ENCODE measurements at regions of chr9 and their contacts with region 1.

Region 1: GRCh38 chr9:68872026-68872501 is 141.8 kb downstream of the PRKACG start:
- DNase-seq: peak; percentile 75 to 93
- H3K4me3 ChIP-seq: peak overlapping the region in 1 of 4 experiments; percentile 33; a peak in 1 of 8 replicates
- H3K27ac ChIP-seq: peak overlapping the region; percentile 93
- H3K4me1 ChIP-seq: peaks cover 2 to 38% (median 26%) of the 10 kb centered on the region in 4 experiments; a peak in 6 of 7 replicates
- H3K27me3 ChIP-seq: no peaks in the 10 kb centered on the region
- CTCF ChIP-seq: no peak
- EP300 ChIP-seq: peak in 1 of 2 experiments; percentile 96; a peak in 2 of 3 replicates
- POLR2A ChIP-seq: peak in 1 of 2 experiments; percentile 75; a peak in 2 of 3 replicates
- RAD21 ChIP-seq: peak in 1 of 2 experiments; percentile 13; a peak in 2 of 4 replicates

Region 2: DNA sequence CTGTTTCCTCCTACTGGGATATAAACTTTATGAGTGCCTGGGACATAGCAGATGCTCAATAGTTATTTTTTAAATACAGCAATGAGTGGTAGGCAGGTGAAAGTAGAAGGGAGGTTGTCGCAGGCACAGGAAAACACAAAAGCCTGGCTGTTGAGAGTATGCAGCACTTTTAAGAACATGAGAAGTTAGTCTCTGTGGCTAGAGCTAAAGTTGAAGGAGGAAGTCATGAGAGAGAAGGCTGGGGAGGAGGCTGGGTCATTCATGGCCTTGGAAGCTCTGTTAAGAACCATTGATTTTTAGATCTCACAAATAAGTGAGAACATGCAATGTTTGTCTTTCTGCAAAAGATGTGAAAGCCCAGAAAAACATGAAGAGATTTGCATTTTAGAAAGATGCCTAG is 15.2 kb after region 1 on chr9:
- CTCF ChIA-PET with region 1: interaction called, 3 read pairs
- POLR2A ChIA-PET with region 1: interaction called, 11 read pairs
- DNase-seq: no peak
- H3K4me3 ChIP-seq: no peak overlapping the region
- H3K27ac ChIP-seq: no peak overlapping the region
- H3K4me1 ChIP-seq: no peaks in the 10 kb centered on the region
- H3K27me3 ChIP-seq: no peaks in the 10 kb centered on the region
- CTCF ChIP-seq: no peak
- EP300 ChIP-seq: no peak
- POLR2A ChIP-seq: no peak
- RAD21 ChIP-seq: no peak

Region 3: GRCh38 chr9:68966496-68966944 is 94.5 kb after region 1 on chr9:
- CTCF ChIA-PET with region 1: no interaction called
- POLR2A ChIA-PET with region 1: no interaction called
- DNase-seq: no peak
- H3K4me3 ChIP-seq: no peak overlapping the region
- H3K27ac ChIP-seq: no peak overlapping the region
- H3K4me1 ChIP-seq: no peaks in the 10 kb centered on the region
- H3K27me3 ChIP-seq: no peaks in the 10 kb centered on the region
- CTCF ChIP-seq: no peak
- EP300 ChIP-seq: no peak
- POLR2A ChIP-seq: no peak
- RAD21 ChIP-seq: no peak

Measured in H1 (cell line).